ENCODE measurements at regions of chr19 and their contacts with region 1.

Region 1: DNA sequence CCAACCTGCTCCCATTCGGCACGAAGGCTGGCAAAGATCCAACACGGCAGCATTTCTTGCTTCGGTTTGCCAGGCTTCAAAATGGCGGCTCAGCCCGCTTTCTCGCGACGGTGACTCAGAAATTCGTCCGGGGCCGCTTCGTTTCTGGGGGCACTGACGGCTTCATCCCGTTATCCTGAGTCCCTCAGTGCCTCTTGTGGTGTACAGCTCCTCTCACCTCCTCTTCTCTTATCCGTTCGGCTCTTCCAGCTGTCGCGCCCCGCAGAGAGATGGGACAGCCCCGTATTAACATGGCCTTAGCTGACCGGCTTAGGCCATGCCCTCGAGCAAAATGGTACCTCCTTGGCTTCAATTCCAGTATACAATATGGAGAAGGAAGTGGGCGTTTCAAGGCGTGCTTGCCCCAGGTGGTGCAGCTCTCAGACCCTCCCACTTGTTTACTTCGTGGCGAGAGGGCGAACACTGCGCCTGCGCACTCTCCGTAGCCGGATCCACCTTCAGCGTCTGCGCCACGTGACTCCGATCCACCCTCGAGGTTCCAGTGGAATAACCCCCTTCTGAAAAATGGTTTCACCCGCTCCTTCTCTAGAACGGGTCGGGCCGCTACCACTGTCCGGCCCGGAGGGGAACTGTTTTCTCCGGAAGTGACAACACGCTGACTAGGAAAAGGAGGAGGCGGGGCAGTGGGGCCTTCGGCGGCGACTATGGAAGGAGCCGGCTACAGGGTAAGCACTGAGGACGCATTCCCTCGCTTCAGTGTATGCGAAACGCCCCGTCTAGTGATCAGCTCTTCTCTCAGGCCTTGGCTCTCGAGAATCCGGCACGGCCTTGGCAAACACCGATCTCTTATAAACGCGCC is at the starts of genes AKT1S1 and TBC1D17:
- DNase-seq: peak; percentile 96 to 100 (median 97)
- ATAC-seq: peak; percentile 60
- H3K4me3 ChIP-seq: peak within 1 kb of the TSS; percentile 88 to 97
- H3K4me3 Mint-ChIP-seq: no peak within 1 kb of the TSS
- H3K27ac ChIP-seq: peak within 1 kb of the TSS; percentile 97 to 98
- H3K27ac Mint-ChIP-seq: no peak within 1 kb of the TSS
- H3K4me1 ChIP-seq: peaks cover 22% of the 10 kb centered on the region
- H3K4me1 Mint-ChIP-seq: peaks cover 29% of the 10 kb centered on the region
- H3K27me3 ChIP-seq: no peaks in the 10 kb centered on the region
- H3K27me3 Mint-ChIP-seq: no peaks in the 10 kb centered on the region
- CTCF ChIP-seq: no peak
- total RNA-seq, gene AKT1S1: 12.6 to 14.1 TPM
- total RNA-seq, gene TBC1D17: 31.1 to 31.2 TPM

Region 2: GRCh38 chr19:49451430-49452181 is 425.6 kb before region 1 on chr19 and contains the start of gene PIH1D1:
- CTCF ChIA-PET with region 1: no interaction called
- POLR2A ChIA-PET with region 1: interaction called, 3 read pairs
- intact Hi-C with region 1: loop called in 1 of 2 experiments (anchors 5 kb)
- DNase-seq: peak; percentile 86 to 99 (median 94)
- ATAC-seq: peak; percentile 66
- H3K4me3 ChIP-seq: peak within 1 kb of the TSS; percentile 87 to 94
- H3K4me3 Mint-ChIP-seq: peak within 1 kb of the TSS; percentile 99
- H3K27ac ChIP-seq: peak within 1 kb of the TSS; percentile 89 to 96
- H3K27ac Mint-ChIP-seq: peak within 1 kb of the TSS; percentile 99
- H3K4me1 ChIP-seq: peaks cover 31% of the 10 kb centered on the region
- H3K4me1 Mint-ChIP-seq: peaks cover 50% of the 10 kb centered on the region
- H3K27me3 ChIP-seq: no peaks in the 10 kb centered on the region
- H3K27me3 Mint-ChIP-seq: no peaks in the 10 kb centered on the region
- CTCF ChIP-seq: no peak
- total RNA-seq, gene PIH1D1: 113 to 119 TPM

Region 3: GRCh38 chr19:49590071-49590970 is 286.9 kb before region 1 on chr19:
- CTCF ChIA-PET with region 1: no interaction called
- POLR2A ChIA-PET with region 1: no interaction called
- intact Hi-C with region 1: loop called in 1 of 2 experiments (anchors 2 kb)
- DNase-seq: peak; percentile 90 to 98 (median 94)
- ATAC-seq: peak; percentile 77
- H3K4me3 ChIP-seq: peak overlapping the region; percentile 78 to 97
- H3K4me3 Mint-ChIP-seq: peak overlapping the region; percentile 91
- H3K27ac ChIP-seq: peak overlapping the region; percentile 82 to 83
- H3K27ac Mint-ChIP-seq: peak overlapping the region; percentile 91
- H3K4me1 ChIP-seq: peaks cover 23% of the 10 kb centered on the region
- H3K4me1 Mint-ChIP-seq: peaks cover 36% of the 10 kb centered on the region
- H3K27me3 ChIP-seq: no peaks in the 10 kb centered on the region
- H3K27me3 Mint-ChIP-seq: no peaks in the 10 kb centered on the region
- CTCF ChIP-seq: peak; percentile 29

Region 4: DNA sequence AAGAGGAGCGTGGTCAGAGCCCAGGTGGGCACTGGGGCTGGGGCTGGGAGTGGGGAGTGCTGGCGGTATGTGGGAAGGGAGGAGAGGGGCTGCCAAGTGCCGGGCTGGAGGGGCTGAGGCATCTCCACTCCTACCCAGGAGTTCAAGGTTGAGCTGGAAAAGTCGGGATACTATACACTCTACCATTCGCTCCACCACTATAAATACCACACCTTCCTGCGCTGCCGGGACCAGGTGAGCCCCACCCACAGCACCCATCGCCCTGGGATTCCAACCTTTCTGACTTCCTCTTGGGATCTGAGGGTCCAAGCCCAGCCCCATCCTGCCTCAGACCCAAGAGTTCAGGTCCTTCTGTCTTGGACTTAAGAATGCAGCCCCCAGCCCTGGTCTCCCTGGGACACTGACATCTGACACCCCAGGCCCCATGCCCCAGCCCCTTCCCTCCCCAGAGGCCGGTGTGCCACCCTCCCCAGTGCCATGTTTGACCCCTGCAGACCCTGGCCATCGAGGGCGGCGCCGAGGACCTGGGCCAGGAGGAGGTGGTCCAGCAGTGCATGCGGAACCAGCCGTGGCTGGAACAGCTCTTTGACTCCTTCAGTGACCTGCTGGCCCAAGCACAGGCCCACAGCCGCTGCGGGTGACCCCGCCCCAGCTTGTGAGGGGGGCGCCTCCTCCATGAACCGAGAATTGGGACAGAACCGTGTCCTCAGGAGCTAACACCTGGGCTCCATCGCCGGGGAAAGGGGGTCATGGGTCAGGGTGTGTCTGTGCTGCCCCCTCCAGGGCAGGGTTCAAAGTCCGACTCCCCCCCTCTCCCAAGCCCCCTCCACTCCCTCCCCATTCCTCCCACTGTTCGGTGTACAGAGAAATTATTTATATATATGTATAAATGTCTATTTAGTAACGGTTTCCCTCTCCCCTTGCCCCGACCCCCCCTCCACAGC is 252.0 kb before region 1 on chr19:
- CTCF ChIA-PET with region 1: no interaction called
- POLR2A ChIA-PET with region 1: no interaction called
- intact Hi-C with region 1: no loop called
- DNase-seq: no peak
- ATAC-seq: no peak
- H3K4me3 ChIP-seq: no peak overlapping the region
- H3K4me3 Mint-ChIP-seq: no peak overlapping the region
- H3K27ac ChIP-seq: no peak overlapping the region
- H3K27ac Mint-ChIP-seq: no peak overlapping the region
- H3K4me1 ChIP-seq: no peaks in the 10 kb centered on the region
- H3K4me1 Mint-ChIP-seq: no peaks in the 10 kb centered on the region
- H3K27me3 ChIP-seq: no peaks in the 10 kb centered on the region
- H3K27me3 Mint-ChIP-seq: no peaks in the 10 kb centered on the region
- CTCF ChIP-seq: no peak

Region 5: GRCh38 chr19:49766007-49766937 is 111.0 kb before region 1 on chr19:
- CTCF ChIA-PET with region 1: no interaction called
- POLR2A ChIA-PET with region 1: interaction called, 7 read pairs
- intact Hi-C with region 1: loop called (anchors 1 kb)
- DNase-seq: peak; percentile 97 to 100 (median 99)
- ATAC-seq: peak; percentile 87
- H3K4me3 ChIP-seq: peak overlapping the region; percentile 62 to 76
- H3K4me3 Mint-ChIP-seq: peak overlapping the region; percentile 82
- H3K27ac ChIP-seq: peak overlapping the region; percentile 66 to 87
- H3K27ac Mint-ChIP-seq: peak overlapping the region; percentile 93
- H3K4me1 ChIP-seq: peaks cover 24% of the 10 kb centered on the region
- H3K4me1 Mint-ChIP-seq: peaks cover 38% of the 10 kb centered on the region
- H3K27me3 ChIP-seq: no peaks in the 10 kb centered on the region
- H3K27me3 Mint-ChIP-seq: no peaks in the 10 kb centered on the region
- CTCF ChIP-seq: no peak

Region 6: DNA sequence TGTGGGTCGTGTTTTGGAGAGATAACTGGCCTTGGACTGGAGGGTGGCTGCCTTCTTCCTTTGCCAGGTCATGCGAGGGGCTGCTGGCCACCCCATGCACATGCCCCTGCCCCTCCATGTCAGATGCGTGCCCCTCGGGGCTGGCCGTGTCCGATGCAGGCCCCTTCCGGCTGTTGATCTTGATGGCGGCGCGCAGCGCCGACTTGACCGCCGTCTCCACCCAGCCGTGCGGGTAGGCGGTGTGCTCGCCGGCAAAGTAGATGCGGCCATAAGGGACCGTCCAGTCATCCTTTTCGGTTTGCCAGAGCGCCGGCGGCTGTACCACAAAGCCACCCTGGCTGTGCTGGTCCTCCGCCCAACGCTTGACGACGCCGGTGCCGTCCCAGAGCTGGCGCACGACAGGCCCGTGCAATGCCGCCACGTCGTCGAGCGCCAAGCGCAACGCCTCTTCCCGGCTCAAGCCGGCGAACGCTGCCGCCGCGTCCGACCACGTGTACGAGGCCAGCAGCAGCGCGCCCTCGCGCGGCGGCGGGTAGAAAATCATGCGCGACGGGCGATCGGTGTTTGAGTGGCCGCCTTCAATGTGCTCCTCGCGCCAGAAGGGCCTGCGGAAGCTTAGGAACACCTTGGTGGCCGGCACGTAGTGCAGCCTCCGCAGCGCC is 12.6 kb after region 1 on chr19:
- CTCF ChIA-PET with region 1: interaction called, 5 read pairs
- POLR2A ChIA-PET with region 1: interaction called, 15 read pairs
- intact Hi-C with region 1: loop called (anchors 1 kb)
- DNase-seq: peak; percentile 60 to 88 (median 77)
- ATAC-seq: peak; percentile 74
- H3K4me3 ChIP-seq: peak overlapping the region; percentile 56 to 63
- H3K4me3 Mint-ChIP-seq: peak overlapping the region; percentile 79
- H3K27ac ChIP-seq: no peak overlapping the region
- H3K27ac Mint-ChIP-seq: peak overlapping the region; percentile 52
- H3K4me1 ChIP-seq: peaks cover 6% of the 10 kb centered on the region
- H3K4me1 Mint-ChIP-seq: peaks cover 9% of the 10 kb centered on the region
- H3K27me3 ChIP-seq: no peaks in the 10 kb centered on the region
- H3K27me3 Mint-ChIP-seq: no peaks in the 10 kb centered on the region
- CTCF ChIP-seq: peak; percentile 89

Region 7: GRCh38 chr19:50003810-50004419 is 126.7 kb after region 1 on chr19:
- CTCF ChIA-PET with region 1: no interaction called
- POLR2A ChIA-PET with region 1: no interaction called
- intact Hi-C with region 1: no loop called
- DNase-seq: peak in 3 of 9 experiments; percentile 35 to 62 (median 50)
- ATAC-seq: no peak
- H3K4me3 ChIP-seq: no peak overlapping the region
- H3K4me3 Mint-ChIP-seq: no peak overlapping the region
- H3K27ac ChIP-seq: peak overlapping the region in 1 of 2 experiments; percentile 43
- H3K27ac Mint-ChIP-seq: peak overlapping the region; percentile 22
- H3K4me1 ChIP-seq: no peaks in the 10 kb centered on the region
- H3K4me1 Mint-ChIP-seq: peaks cover 7% of the 10 kb centered on the region
- H3K27me3 ChIP-seq: no peaks in the 10 kb centered on the region
- H3K27me3 Mint-ChIP-seq: no peaks in the 10 kb centered on the region
- CTCF ChIP-seq: no peak

Region 8: DNA sequence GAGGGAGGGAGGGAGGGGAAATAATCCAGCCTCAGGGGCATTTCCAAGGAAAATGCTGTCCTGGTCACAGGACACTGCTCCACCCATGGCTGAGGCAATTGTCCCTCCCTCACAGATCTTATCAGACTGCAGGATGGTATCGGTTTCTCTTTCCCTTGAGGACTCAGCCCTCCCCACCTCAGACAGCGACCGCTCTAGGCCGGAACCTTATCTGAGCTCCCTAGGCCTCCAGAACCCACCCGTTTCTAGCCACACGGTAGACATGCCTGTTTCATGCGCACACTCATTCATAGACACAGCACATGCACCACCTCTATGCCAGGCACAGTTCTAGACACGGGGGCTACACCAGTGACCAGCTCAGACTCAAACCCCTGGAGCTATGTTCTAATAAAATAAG is 295.9 kb after region 1 on chr19:
- CTCF ChIA-PET with region 1: no interaction called
- POLR2A ChIA-PET with region 1: no interaction called
- intact Hi-C with region 1: no loop called
- DNase-seq: peak in 1 of 9 experiments; percentile 33
- ATAC-seq: no peak
- H3K4me3 ChIP-seq: no peak overlapping the region
- H3K4me3 Mint-ChIP-seq: no peak overlapping the region
- H3K27ac ChIP-seq: no peak overlapping the region
- H3K27ac Mint-ChIP-seq: peak overlapping the region; percentile 2
- H3K4me1 ChIP-seq: no peaks in the 10 kb centered on the region
- H3K4me1 Mint-ChIP-seq: no peaks in the 10 kb centered on the region
- H3K27me3 ChIP-seq: no peaks in the 10 kb centered on the region
- H3K27me3 Mint-ChIP-seq: peaks cover 19% of the 10 kb centered on the region
- CTCF ChIP-seq: no peak